Mammary epithelial cell (primary cell): ENCODE measurements at regions of chr5 and their contacts with region 1.

Region 1: DNA sequence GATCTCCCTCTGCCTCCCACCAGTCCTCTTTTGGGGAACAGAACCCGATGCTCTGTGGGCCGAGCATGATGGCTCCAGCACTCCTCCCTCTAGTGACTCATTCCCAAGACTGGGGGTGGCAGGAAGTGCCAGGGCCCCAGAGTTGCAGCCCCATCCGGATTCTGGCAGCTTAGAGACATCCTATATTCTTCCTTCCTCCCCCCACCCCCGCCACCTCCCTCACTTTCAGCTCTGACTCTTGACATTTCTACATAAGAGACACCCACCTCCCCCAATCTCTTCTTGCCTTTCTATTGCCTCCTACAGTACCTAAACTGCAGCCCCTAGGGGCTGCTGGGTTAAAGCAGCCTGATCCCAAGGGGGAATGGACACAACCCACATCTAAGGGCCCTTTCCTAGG is 47.1 kb upstream of the MATR3 start:
- DNase-seq: peak; percentile 48
- H3K4me3 ChIP-seq: no peak overlapping the region
- H3K27ac ChIP-seq: no peak overlapping the region
- H3K4me1 ChIP-seq: peaks cover 13% of the 10 kb centered on the region
- H3K27me3 ChIP-seq: no peaks in the 10 kb centered on the region
- CTCF ChIP-seq: no peak

Region 2: GRCh38 chr5:139164020-139164419 is 82.4 kb before region 1 on chr5:
- CTCF ChIA-PET with region 1: no interaction called
- dilution Hi-C with region 1: loop called (anchors 5 kb)
- in situ Hi-C with region 1: no loop called
- intact Hi-C with region 1: no loop called
- DNase-seq: no peak
- H3K4me3 ChIP-seq: no peak overlapping the region
- H3K27ac ChIP-seq: no peak overlapping the region
- H3K4me1 ChIP-seq: peaks cover 3% of the 10 kb centered on the region
- H3K27me3 ChIP-seq: no peaks in the 10 kb centered on the region
- CTCF ChIP-seq: no peak

Region 3: DNA sequence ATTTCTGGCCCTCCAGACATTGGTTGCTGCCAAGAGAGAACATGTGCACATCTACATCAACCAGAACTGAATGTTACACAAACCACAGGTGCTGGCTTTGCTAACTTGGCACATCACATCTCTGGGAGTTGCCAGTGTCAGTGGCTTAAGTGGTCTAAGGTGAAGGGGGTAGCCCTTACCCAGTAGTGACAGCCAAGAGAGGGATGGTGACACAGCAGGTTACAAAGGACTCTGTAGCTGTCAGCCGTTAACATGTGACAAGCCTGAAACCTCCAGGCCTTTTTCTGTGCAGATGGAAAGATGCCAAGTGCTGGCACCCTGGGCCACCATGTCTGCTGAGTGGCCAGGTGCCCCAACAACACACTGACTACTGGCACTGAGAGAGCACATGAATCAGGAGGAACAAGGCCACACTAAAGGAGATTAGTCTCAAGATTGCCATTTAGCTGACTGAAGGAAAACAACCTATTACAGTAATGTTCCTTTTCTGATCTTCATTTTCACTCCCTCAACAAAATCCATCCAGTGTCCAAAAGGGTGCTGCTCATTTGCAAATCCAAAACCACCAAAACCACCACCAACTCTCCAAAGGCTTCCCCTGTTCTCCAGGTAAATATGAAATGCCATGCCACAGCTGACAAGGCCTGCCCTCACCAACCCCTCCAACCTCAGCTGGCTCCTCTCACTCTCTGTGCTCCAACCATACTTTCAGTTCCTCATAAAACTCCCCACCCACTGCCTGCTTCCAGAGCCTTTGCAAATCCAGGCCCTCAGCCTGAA is 68.4 kb before region 1 on chr5:
- CTCF ChIA-PET with region 1: no interaction called
- dilution Hi-C with region 1: no loop called
- in situ Hi-C with region 1: no loop called
- intact Hi-C with region 1: no loop called
- DNase-seq: no peak
- H3K4me3 ChIP-seq: no peak overlapping the region
- H3K27ac ChIP-seq: no peak overlapping the region
- H3K4me1 ChIP-seq: peaks cover 37% of the 10 kb centered on the region
- H3K27me3 ChIP-seq: no peaks in the 10 kb centered on the region
- CTCF ChIP-seq: no peak

Region 4: DNA sequence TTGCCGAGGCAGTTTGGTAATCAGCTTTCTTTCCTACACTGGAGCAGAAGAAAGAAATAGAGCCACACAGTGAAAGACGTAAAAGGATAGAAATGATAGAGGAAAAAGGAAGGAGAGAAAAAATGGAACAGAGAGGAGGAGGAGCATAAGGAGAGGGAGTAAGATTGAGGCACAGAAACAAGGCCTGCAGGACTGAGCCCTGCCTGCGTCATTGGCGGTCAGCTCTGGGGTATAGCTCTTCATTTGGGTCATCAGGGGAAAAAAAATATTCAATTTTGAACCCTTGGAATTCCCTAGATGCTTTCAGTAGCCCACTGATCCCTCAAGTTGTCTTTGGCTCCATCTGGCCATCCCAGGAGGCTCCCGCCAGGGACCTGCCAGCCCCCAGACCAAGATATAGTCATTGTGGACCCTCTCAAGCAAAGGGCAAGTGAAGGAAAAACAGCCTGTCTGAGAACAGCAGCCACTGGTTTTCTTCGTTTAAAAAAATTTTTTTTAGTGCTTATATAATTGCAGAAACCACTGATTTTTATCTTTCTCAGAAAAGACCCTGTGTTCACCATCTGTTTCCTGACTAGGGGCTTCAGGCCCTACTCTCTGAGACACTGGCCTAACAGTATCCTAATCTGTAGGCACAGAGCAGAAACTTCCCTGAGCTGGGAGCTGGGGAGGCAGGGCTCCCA is 15.8 kb after region 1 on chr5:
- CTCF ChIA-PET with region 1: no interaction called
- dilution Hi-C with region 1: no loop called
- in situ Hi-C with region 1: no loop called
- intact Hi-C with region 1: no loop called
- DNase-seq: no peak
- H3K4me3 ChIP-seq: no peak overlapping the region
- H3K27ac ChIP-seq: no peak overlapping the region
- H3K4me1 ChIP-seq: peaks cover 6% of the 10 kb centered on the region
- H3K27me3 ChIP-seq: no peaks in the 10 kb centered on the region
- CTCF ChIP-seq: no peak

Region 5: DNA sequence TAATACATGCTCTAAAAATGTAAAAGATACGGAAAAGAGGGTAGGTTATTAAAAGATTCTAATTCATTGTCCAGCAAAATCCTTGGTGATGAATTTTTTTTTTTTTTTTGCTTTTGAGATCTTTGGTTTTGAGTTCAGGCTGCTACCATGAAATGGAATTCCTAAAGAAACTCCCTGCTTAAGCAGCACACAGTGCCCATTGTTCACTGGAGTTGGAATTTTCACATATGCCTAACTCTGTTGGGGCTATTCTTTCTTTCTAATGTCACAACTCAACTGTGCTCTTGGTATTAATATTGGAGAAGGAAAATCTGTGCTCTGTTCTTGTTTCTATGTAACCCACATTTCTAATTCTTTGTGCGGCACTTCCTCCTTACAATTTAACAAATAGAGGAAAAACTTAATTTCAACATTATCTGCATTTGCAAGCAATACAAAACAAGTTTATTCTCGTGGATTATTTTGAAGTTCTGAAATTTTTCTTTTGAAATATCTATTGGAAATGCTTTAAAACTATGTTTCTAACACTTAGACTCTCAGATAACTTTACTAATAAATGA is 68.7 kb after region 1 on chr5:
- CTCF ChIA-PET with region 1: no interaction called
- dilution Hi-C with region 1: no loop called
- in situ Hi-C with region 1: no loop called
- intact Hi-C with region 1: no loop called
- DNase-seq: no peak
- H3K4me3 ChIP-seq: no peak overlapping the region
- H3K27ac ChIP-seq: no peak overlapping the region
- H3K4me1 ChIP-seq: peaks cover 14% of the 10 kb centered on the region
- H3K27me3 ChIP-seq: no peaks in the 10 kb centered on the region
- CTCF ChIP-seq: no peak